Tibial artery (tissue), 4 donors: ENCODE measurements at regions of chr4 and their contacts with region 1.

Region 1: DNA sequence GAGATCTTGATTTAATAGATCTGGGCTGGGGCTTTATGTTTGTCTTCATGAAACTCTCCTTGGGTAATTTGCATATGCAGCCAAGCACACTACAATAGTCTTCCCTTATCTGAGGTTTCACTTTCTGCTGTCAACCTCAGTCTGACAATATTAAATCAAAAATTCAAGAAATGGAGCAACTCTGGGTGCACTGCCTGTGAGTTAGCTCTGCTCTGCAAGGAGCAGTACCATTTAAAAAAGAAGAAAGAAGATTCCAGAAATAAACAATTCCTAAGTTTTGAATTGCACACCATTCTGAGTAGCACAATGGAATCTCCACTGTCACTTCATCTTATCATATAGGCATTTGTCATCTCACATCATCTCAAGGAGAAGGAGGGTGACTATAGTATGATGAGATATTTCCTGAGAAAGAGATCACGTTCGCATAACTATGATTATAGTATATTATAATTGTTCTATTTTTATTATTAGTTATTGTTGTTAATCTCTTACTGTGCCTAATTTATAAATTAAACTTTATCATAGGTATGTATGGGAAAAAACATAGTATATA is 9.4 kb downstream of the FNIP2 start:
- DNase-seq: no peak
- H3K4me3 ChIP-seq: no peak overlapping the region
- H3K27ac ChIP-seq: peak overlapping the region in 1 of 2 donors; percentile 24
- H3K4me1 ChIP-seq: peaks cover 0 to 79% (median 30%) of the 10 kb centered on the region in 4 donors
- H3K27me3 ChIP-seq: no peaks in the 10 kb centered on the region
- CTCF ChIP-seq: no peak

Region 2: GRCh38 chr4:158521484-158522088 is 256.6 kb before region 1 on chr4 and contains the start of gene RXFP1:
- intact Hi-C with region 1: no loop called
- DNase-seq: no peak
- H3K4me3 ChIP-seq: no peak within 1 kb of the TSS
- H3K27ac ChIP-seq: no peak within 1 kb of the TSS
- H3K4me1 ChIP-seq: no peaks in the 10 kb centered on the region
- H3K27me3 ChIP-seq: no peaks in the 10 kb centered on the region
- CTCF ChIP-seq: no peak

Region 3: GRCh38 chr4:158750379-158750778 is 27.9 kb before region 1 on chr4:
- intact Hi-C with region 1: no loop called
- DNase-seq: no peak
- H3K4me3 ChIP-seq: no peak overlapping the region
- H3K27ac ChIP-seq: peak overlapping the region in 1 of 2 donors; percentile 2
- H3K4me1 ChIP-seq: peaks cover 0 to 7% (median 0%) of the 10 kb centered on the region in 4 donors
- H3K27me3 ChIP-seq: no peaks in the 10 kb centered on the region
- CTCF ChIP-seq: no peak

Region 4: DNA sequence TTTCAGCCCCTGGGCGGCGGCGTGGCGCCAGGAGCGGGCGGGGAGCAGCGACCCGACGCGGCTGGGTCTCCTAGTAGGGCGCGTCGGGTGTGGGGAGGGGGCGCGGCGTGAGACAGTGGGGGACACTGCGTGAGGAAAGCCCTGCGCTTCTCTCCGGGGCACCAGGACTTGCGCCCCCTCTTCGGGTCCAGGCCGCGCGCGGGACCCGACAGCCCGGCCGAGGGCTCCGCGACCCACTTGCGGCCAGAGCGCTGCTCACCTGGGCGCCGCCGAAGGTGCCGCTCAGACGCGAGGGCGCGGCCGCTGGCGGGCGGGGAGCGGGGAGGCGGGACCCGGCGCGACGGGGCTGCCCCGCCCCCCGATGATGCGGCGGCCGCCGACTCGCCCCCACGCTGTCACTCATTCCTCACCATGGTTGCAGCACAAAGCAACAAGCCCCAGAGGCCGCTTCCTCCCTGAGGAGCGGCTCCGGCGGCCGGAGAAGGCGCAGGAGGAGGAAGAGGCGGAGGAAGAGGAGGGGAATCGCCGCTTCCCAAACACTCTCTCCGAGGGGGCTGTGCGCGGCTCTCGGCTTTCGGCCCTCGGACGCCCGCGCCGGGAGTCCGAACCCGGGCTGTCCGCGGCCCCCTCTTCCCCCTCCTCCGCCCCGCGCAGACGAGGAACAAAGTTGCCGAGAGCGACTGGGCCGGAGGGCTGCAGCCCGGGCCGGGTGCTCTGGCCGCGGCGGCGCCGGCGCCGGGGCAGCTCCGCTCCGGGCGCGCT is 324.6 kb after region 1 on chr4 and contains the start of gene RAPGEF2:
- intact Hi-C with region 1: loop called (anchors 10 kb)
- DNase-seq: peak; percentile 91 to 96
- H3K4me3 ChIP-seq: peak within 1 kb of the TSS; percentile 89 to 99
- H3K27ac ChIP-seq: peak within 1 kb of the TSS; percentile 96 to 99
- H3K4me1 ChIP-seq: peaks cover 0 to 29% (median 17%) of the 10 kb centered on the region in 4 donors
- H3K27me3 ChIP-seq: no peaks in the 10 kb centered on the region
- CTCF ChIP-seq: no peak

Region 5: GRCh38 chr4:159966746-159967145 is 1188.5 kb after region 1 on chr4:
- intact Hi-C with region 1: loop called (anchors 5 kb)
- DNase-seq: no peak
- H3K4me3 ChIP-seq: no peak overlapping the region
- H3K27ac ChIP-seq: no peak overlapping the region
- H3K4me1 ChIP-seq: no peaks in the 10 kb centered on the region
- H3K27me3 ChIP-seq: no peaks in the 10 kb centered on the region
- CTCF ChIP-seq: no peak